Lower leg skin (tissue), 4 donors: ENCODE measurements at regions of chr9 and their contacts with region 1.

Region 1: DNA sequence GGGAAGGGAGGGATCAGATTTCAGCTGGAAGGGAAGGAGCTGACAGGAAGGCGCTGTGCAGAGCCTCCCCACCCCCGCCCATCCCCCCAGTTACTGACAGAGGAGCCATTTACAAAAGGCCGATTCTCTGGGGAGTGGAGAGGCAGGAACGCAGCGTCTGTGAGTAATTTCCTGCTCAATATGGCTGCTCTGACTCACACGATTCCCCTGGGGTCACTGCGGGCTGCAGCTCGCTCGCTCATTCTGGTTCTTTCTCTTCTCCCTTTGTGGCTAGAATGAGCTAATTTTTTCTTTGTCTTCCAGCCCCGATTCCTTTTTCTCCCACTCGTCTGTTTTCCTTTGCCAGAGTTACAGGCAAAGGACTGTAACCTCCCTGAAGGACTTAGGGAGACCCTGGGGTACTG is 28.8 kb downstream of the PTPA start:
- DNase-seq: peak; percentile 95 to 97
- H3K4me3 ChIP-seq: peak overlapping the region; percentile 16
- CTCF ChIP-seq: no peak
- POLR2A ChIP-seq: no peak

Region 2: DNA sequence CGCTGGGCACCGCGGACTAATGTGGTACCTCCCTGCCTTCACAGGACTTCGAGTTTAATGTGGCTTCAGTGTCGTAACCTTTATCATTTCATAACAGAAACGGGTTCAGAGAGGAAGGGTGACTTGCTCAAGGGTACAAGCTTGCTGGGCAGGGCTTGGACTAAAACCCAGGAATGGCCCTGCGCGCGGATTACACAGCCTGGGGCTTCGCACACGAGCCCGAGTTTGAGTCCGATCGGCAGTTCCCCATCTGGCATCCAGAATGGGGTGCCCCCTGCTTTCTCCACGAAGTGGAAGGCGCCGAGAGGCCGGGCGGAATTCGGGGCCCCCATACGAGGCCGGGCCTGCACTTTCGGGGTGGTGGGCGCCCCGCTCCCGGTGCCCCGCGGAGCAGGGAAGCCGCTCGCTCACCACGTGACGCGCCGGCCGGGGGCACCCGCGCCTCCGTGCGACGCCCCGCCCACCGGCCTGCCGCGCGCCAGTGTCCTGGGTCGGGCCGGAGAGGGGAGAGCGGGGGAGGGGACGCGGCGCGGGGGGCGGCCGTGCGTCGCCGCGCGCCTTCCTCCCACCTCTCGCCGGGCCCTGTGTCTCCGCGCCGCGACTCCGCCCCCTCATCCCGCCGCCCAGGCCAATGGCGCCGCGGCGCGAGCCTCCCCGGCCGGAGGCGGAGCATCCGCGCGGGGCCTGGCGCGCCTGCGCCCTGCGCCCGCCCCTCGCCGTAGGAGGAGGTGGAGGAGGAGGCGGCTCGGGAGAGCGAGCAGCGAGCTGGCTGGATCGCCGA is 451.3 kb before region 1 on chr9 and contains the start of gene SET:
- intact Hi-C with region 1: no loop called
- DNase-seq: peak; percentile 86 to 98
- H3K4me3 ChIP-seq: peak within 1 kb of the TSS; percentile 70
- CTCF ChIP-seq: no peak
- POLR2A ChIP-seq: peak in 1 of 2 donors; percentile 71
- total RNA-seq, gene SET: 135 to 220 (median 178) TPM

Region 3: DNA sequence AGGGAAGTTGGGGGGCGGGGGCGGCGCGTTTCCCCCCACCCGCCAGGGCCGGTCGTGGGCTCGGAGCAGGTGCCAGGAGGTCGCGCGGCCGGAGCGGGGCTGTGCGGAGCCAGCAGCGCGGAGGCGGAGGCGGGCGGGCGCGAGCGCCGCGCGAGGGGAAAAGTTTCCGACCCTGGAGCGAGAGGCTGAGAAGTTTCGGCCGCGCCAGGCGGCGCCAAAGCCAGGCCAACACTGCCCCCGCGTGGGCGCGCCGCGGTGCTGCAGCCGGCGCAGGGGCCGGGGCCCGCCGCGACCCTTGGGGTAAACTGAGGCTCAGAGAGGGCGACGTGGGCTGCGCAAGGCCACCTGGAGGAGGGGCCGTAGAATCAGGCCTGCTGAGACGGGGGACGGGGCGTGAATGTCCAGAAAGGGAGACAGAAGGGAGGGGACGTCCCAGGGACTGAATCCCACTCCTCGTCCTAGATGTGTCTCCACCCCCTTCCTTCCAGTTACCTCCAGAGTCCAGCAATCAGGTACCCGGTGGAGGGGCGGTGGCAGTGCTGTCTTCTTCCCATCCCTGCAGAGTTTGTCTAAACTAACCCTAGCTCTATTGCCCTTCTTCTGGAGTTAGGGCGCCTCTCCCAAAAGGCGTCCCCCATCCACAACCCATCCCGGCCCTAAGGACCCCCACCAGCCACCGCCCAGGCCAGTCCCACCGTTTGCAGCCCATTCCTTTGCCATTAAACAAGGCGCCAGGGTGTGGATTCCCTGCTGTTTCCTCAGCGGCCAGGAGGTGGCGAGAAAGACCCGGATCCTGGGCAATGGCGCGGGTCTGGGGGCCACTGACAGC is 470.7 kb after region 1 on chr9:
- intact Hi-C with region 1: loop called (anchors 5 kb)
- DNase-seq: peak in 1 of 2 donors; percentile 96
- H3K4me3 ChIP-seq: no peak overlapping the region
- CTCF ChIP-seq: peak in 1 of 3 donors; percentile 88
- POLR2A ChIP-seq: no peak

Region 4: GRCh38 chr9:129776938-129777768 is 637.2 kb after region 1 on chr9:
- intact Hi-C with region 1: loop called (anchors 10 kb)
- DNase-seq: peak; percentile 93 to 99
- H3K4me3 ChIP-seq: no peak overlapping the region
- CTCF ChIP-seq: no peak
- POLR2A ChIP-seq: no peak